Upper lobe of right lung (tissue), 1 donor: ENCODE measurements at regions of chr6 and their contacts with region 1.

Region 1: GRCh38 chr6:36985808-36986703 is at the start of gene MTCH1:
- DNase-seq: peak; percentile 94
- ATAC-seq: peak; percentile 97
- H3K4me3 ChIP-seq: peak within 1 kb of the TSS; percentile 80
- H3K27ac ChIP-seq: peak within 1 kb of the TSS; percentile 98
- H3K4me1 ChIP-seq: peaks cover 36% of the 10 kb centered on the region
- H3K27me3 ChIP-seq: no peaks in the 10 kb centered on the region
- CTCF ChIP-seq: no peak
- total RNA-seq, gene MTCH1: 194 TPM

Region 2: DNA sequence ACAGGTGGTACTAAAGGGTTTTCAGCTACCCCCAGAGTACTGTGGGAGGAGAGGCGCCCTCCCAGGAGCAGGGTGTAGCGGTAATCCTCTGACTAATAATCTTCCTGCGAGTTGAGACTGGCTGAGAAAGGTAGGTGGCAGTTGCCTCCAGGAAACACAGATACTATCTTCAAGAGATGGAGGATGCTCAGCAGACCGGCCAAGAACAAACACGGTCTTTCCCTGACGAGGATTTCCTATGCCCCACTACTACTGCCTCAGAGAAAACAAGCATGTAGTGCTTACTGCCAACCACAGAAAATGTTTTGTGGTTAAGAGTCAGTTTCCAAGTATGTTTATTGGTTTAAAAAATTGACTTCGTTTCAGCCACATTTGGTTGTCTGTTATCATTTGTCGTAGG is 73.5 kb before region 1 on chr6:
- intact Hi-C with region 1: loop called (anchors 5 kb)
- DNase-seq: no peak
- ATAC-seq: no peak
- H3K4me3 ChIP-seq: no peak overlapping the region
- H3K27ac ChIP-seq: peak overlapping the region; percentile 24
- H3K4me1 ChIP-seq: peaks cover 22% of the 10 kb centered on the region
- H3K27me3 ChIP-seq: no peaks in the 10 kb centered on the region
- CTCF ChIP-seq: no peak